A549 (cell line): ENCODE measurements at regions of chr15 and their contacts with region 1.

Region 1: DNA sequence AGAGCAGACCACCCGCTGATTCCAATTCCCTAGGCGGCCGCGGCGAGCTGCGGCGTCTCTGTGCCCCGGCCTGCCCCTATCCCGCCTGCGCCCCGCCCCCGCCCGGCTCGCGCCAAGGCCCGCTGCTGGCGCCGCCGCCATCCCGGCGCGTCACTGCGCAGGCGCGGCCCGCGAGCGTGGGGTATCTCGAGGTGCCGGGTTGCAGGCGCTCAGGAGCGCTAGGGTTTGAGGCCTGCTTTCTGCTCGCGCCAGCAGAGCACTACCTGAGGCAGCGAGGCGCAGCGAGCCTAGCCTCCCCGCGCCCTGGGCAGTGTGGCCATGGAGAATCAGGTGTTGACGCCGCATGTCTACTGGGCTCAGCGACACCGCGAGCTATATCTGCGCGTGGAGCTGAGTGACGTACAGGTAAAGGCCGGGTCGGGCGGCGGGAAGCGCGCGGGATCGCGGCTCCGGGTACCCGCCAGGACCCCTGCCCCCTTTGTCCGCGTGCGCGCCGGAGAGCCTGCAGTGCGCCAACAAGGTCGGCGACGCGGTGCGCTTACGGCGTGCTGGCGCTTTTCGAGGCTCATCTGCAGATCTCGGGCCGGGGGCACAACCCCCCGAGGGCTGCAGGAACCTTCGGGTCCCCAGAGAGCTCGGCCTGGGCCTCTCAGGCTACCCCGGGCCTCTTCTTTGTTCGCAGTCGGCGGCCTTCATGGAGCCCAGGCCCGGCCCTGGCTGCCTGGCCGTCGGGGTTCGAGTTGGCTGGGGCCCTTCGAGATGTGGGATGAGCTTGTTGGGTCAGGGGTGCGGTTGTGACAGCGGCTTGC is at the start of gene HACD3:
- DNase-seq: peak; percentile 90 to 97
- ATAC-seq: peak; percentile 94 to 96
- H3K4me3 ChIP-seq: peak within 1 kb of the TSS; percentile 78
- H3K27ac ChIP-seq: peak within 1 kb of the TSS; percentile 85 to 91
- H3K4me1 ChIP-seq: peaks cover 44% of the 10 kb centered on the region
- CTCF ChIP-seq: no peak
- EP300 ChIP-seq: no peak
- POLR2A ChIP-seq: peak; percentile 89
- RAD21 ChIP-seq: no peak
- polyA plus RNA-seq, gene HACD3: 186 and 212 TPM in 2 replicates

Region 2: DNA sequence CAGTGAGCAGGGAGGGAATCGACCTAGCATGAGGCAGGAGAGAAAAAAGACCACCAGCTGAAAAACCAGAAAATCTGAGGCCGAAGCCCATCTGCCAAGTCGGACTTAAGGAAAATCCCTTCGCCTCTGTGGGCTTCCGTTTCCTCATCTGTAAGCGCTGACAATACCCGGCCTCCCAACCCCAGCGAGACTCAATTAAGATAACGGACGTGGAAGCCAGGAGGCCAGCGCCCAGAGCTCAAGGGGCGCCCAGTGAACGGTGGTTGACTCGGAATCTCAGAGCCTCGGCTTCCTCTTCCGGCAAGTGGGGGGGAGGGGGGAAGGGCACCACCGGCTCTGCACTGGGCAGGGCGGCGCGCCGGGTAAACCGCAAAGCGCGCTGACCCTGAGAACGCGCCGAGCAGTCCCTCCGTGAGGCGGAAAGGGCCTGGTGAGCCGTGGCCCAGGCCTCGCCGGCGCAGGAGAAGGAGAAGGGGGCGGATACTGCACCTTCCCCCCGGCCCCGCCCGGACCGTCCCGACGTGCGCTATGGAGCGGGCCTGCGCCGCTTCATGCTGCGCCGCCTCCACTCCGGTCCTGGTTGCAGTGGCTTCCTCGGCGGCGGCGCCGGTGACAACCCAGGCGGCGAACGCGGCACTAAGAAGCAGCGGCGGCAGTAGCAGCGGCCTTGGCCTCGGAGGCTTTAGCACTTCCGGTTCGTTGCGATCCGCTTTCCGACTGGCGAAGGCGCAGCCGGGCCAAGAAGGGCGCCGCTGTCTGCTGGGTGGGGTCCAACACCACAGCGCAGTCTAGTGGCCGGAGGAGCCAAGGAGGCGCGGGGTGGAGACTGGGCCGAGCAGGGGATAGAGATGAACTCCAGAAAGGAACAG is 13.3 kb before region 1 on chr15 and contains the start of gene DPP8:
- CTCF ChIA-PET with region 1: interaction called, 7 read pairs
- POLR2A ChIA-PET with region 1: interaction called, 23 read pairs
- DNase-seq: peak; percentile 95 to 98
- ATAC-seq: peak; percentile 97 to 99
- H3K4me3 ChIP-seq: peak within 1 kb of the TSS; percentile 84
- H3K27ac ChIP-seq: peak within 1 kb of the TSS; percentile 93 to 97
- H3K4me1 ChIP-seq: peaks cover 19% of the 10 kb centered on the region
- CTCF ChIP-seq: peak; percentile 97
- EP300 ChIP-seq: no peak
- POLR2A ChIP-seq: peak; percentile 69
- RAD21 ChIP-seq: peak; percentile 19 to 43; a peak in 1 of 5 replicates
- polyA plus RNA-seq, gene DPP8: 41.8 and 43.3 TPM in 2 replicates